Activated T-helper 2 cell treated with anti-CD3 and anti-CD28 coated beads, Interferon-gamma antibody, Interleukin-2, Interleukin-4, amounts not matched to agents 10 μg/mL and 5 μg/mL and 100 μg/mL, durations not matched to agents 14 hours and 24 hours and 36 hours (primary cell): ENCODE measurements at regions of chr18 and their contacts with region 1.

Region 1: GRCh38 chr18:158128-159036 is at the start of gene USP14:
- DNase-seq: peak; percentile 96
- H3K4me3 Mint-ChIP-seq: peak within 1 kb of the TSS; percentile 96
- H3K27ac Mint-ChIP-seq: peak within 1 kb of the TSS; percentile 89
- H3K4me1 Mint-ChIP-seq: peaks cover 19% of the 10 kb centered on the region
- H3K27me3 Mint-ChIP-seq: no peaks in the 10 kb centered on the region
- total RNA-seq, gene USP14: 89.7 and 98.4 TPM in 2 replicates

Region 2: DNA sequence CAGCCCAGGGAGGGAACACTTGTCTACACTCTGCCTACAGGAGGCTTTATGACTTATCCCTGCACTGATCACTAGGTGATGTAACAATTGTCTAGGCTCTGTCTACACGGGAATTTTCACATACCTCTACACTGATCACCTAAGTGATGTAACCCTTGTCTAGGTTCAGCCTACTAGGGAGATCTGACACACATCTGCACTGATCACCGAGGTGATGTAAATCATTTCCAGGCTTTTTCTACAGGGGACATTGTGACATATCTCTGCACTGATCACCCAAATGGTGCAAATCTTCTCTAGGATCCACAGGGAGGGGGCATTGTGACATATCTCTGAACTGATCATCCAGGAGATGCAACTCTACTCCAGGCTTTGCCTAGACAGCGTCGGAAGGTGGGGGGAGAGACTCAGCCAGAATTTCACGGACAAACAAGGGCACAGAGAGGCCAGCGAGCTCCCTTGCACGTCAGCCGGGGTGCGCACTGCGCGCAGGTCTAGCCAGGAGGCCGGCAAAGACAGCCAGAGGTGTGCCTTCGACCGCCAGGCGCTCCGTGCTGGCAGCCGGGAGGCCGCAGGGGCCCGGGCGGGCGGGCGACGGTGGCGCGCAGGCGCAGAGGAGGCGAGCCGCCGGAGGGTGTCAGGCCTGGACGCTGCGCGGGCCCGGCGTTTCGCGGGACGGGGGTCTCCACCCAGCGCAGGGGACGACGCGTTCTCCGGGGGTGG is 46.9 kb before region 1 on chr18:
- intact Hi-C with region 1: loop called (anchors 5 kb)
- DNase-seq: peak; percentile 62
- H3K4me3 Mint-ChIP-seq: peak overlapping the region; percentile 74
- H3K27ac Mint-ChIP-seq: peak overlapping the region; percentile 34
- H3K4me1 Mint-ChIP-seq: peaks cover 9% of the 10 kb centered on the region
- H3K27me3 Mint-ChIP-seq: peaks cover 9% of the 10 kb centered on the region

Region 3: DNA sequence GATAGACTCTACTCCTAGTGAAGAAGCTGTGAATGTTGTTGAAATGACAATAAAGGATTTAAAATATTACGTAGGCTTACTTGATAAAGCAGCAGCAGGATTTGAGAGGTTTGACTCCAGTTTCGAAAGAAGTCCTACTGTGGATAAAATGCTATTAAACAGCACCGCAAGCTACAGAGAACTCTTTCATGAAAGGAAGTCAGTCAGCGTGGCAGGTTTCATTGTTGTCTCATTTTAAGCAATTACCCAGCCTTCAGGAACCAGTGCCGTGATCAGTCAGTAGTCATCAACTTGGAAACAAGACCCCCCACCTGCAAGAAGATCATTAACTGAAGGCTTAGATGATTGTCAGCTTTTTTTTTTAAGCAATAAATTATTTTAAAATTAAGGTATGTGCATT is 14.0 kb after region 1 on chr18:
- intact Hi-C with region 1: no loop called
- DNase-seq: no peak
- H3K4me3 Mint-ChIP-seq: no peak overlapping the region
- H3K27ac Mint-ChIP-seq: no peak overlapping the region
- H3K4me1 Mint-ChIP-seq: peaks cover 2% of the 10 kb centered on the region
- H3K27me3 Mint-ChIP-seq: no peaks in the 10 kb centered on the region

Region 4: DNA sequence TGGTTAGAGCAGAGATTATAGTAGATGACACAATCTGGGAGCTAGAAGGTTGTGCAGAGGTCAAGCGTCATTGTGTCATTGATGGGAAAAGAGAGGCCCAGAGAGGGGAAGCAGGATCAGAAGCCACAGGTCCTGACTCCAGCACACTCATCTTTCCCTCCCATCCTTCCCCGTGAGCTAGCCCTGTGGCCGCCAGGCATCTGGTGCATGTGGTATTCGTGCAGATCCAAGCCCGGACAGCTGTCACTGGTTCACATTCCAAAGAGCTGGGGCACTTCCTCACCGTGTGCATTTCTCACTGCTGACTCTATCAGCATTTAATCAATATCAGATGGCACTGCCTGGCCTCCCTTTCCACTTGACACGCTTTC is 203.5 kb after region 1 on chr18:
- intact Hi-C with region 1: no loop called
- DNase-seq: no peak
- H3K4me3 Mint-ChIP-seq: no peak overlapping the region
- H3K27ac Mint-ChIP-seq: no peak overlapping the region
- H3K4me1 Mint-ChIP-seq: no peaks in the 10 kb centered on the region
- H3K27me3 Mint-ChIP-seq: no peaks in the 10 kb centered on the region